Spleen (tissue), 13 donors: ENCODE measurements at regions of chr7 and their contacts with region 1.

Region 1: DNA sequence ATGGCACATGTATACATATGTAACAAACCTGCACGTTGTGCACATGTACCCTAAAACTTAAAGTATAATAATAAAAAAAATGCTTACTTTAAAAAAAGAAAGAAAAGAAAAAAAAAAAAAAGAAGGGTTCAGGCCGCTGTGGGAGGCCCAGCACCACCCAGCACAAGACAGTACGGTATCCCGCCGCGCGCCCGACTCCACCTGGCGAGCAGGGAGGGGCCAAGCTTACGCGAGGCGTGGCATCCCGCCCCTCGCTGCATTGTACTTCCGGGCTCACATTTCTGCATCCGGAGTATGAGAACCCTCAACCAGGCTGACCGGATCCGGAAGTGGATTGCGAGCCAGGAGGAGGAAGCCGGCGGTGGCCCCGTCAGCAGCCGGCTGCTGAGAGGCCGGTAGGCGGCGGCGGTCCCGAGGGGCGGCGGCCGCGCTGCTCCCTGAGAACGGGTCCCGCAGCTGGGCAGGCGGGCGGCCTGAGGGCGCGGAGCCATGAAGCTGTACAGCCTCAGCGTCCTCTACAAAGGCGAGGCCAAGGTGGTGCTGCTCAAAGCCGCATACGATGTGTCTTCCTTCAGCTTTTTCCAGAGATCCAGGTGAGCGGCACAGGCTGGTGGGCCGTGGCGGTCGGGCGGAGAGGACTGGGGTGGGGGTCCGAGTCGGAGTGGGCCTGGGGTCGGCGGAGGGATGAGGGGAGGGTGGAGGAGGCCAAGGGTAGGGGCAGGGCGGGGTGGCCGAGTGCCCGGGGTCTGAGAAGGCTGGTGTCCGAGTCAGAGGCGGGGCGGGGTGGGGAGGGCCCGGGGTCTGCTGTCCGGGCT is at the start of gene YKT6:
- DNase-seq: peak; percentile 99
- H3K4me3 ChIP-seq: peak within 1 kb of the TSS; percentile 76 to 97 (median 86)
- H3K27ac ChIP-seq: peak within 1 kb of the TSS; percentile 69 to 91 (median 82)
- H3K4me1 ChIP-seq: peaks cover 12 to 40% (median 28%) of the 10 kb centered on the region in 6 donors
- H3K27me3 ChIP-seq: peaks cover 0 to 7% (median 0%) of the 10 kb centered on the region in 7 donors
- CTCF ChIP-seq: peak; percentile 59 to 91 (median 76)
- POLR2A ChIP-seq: peak in 2 of 3 donors; percentile 8 to 73
- total RNA-seq, gene YKT6: 51.9 to 66.4 (median 56.6) TPM

Region 2: DNA sequence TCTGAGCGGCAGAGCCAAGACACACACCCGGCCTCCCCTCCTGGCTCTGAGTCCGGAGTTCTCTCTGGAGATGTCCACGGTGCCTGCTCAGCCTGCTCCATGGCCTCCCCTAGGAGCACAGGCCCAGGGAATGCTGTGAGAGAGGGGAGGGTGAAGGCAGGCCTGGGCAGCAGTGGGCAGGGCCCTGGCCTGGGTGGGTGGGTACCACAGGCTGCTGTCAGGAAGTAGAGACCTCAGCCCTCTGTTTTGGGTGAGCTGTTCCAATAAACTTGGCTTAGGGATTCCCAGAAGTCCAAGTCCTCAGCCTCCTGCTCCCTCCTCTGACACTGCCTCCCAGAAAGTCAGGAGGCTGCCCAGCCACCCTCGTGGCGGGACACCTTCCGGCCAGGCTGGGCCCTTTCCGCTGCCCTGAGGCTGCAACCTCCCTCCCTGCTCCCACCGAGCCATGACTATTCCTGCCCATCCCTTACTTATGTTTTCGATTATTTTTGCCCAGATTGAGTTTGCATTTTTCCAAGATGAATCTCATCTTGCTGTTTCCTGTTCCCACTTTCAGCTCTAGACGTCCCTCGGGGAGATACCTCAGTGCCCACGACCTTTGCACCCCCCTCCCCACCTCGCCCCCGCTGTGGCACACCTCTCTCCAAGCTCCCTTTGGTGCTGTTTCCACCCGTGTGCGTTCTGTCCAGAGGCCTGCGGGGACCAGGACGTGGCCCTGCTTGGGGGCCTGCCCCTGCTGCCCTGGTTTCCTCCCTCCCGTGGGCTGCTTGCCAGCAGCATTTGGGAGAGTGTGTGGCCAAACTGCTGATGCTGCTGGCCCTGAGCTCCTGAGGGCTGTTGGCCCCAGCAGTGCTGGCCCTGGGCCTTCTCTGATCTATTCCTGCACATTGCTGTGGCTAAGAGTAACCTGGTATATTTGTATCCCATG is 112.7 kb before region 1 on chr7:
- intact Hi-C with region 1: loop called (anchors 5 kb)
- DNase-seq: peak; percentile 79
- H3K4me3 ChIP-seq: no peak overlapping the region
- H3K27ac ChIP-seq: peak overlapping the region; percentile 65 to 82 (median 76)
- H3K4me1 ChIP-seq: peaks cover 0 to 36% (median 22%) of the 10 kb centered on the region in 6 donors
- H3K27me3 ChIP-seq: no peaks in the 10 kb centered on the region
- CTCF ChIP-seq: no peak
- POLR2A ChIP-seq: no peak